A549 (cell line): ENCODE measurements at regions of chr12 and their contacts with region 1.

Region 1: GRCh38 chr12:54749191-54749818 is 101.1 kb upstream of the DCD start:
- DNase-seq: peak; percentile 43 to 64
- ATAC-seq: peak; percentile 78 to 88
- H3K4me3 ChIP-seq: no peak overlapping the region
- H3K27ac ChIP-seq: no peak overlapping the region
- H3K4me1 ChIP-seq: no peaks in the 10 kb centered on the region
- CTCF ChIP-seq: peak; percentile 89
- EP300 ChIP-seq: no peak
- POLR2A ChIP-seq: no peak
- RAD21 ChIP-seq: peak; percentile 80 to 85

Region 2: GRCh38 chr12:53454710-53455109 is 1294.6 kb before region 1 on chr12:
- CTCF ChIA-PET with region 1: no interaction called
- POLR2A ChIA-PET with region 1: no interaction called
- DNase-seq: no peak
- ATAC-seq: no peak
- H3K4me3 ChIP-seq: no peak overlapping the region; the same call in 2 of the 3 replicates
- H3K27ac ChIP-seq: no peak overlapping the region
- H3K4me1 ChIP-seq: peaks cover 28% of the 10 kb centered on the region
- CTCF ChIP-seq: no peak
- EP300 ChIP-seq: no peak
- POLR2A ChIP-seq: no peak
- RAD21 ChIP-seq: no peak

Region 3: DNA sequence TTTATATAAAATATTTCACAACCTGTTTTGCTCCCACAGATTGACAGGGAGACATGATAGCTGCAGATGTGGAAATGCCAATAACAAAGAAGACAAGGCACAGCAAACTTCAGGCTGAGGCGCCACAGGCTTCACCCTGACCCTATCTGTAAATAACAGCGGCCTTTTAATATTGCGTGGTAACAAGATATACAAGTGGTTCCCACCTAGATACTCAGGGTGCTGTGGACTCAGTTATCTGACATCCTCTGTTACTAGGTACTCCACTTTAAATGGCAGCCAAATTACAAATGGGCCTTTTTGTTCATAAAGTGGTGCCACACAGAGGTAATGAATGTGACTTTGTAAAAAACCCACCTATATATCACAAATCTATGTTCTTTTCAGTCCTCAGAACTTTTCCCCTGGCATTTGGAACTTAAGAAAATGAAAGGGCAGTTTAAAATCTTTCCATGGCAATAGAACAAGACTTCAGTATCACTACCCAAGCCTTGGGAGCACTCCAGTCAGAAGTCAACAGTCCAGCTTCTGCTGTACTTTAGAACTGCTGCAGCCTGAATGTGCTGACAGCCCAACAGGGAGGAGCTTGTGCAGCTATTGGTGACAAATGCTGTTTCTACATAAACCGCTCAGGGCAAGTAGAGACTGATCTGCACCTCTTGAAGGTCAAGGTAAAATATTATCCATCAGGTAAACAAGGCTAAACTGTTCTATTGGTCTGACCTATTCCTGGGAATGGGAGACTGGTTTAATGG is 14.9 kb before region 1 on chr12:
- CTCF ChIA-PET with region 1: interaction called, 15 read pairs
- POLR2A ChIA-PET with region 1: no interaction called
- DNase-seq: no peak
- ATAC-seq: no peak
- H3K4me3 ChIP-seq: no peak overlapping the region
- H3K27ac ChIP-seq: no peak overlapping the region
- H3K4me1 ChIP-seq: no peaks in the 10 kb centered on the region
- CTCF ChIP-seq: no peak
- EP300 ChIP-seq: no peak
- POLR2A ChIP-seq: no peak
- RAD21 ChIP-seq: no peak

Region 4: DNA sequence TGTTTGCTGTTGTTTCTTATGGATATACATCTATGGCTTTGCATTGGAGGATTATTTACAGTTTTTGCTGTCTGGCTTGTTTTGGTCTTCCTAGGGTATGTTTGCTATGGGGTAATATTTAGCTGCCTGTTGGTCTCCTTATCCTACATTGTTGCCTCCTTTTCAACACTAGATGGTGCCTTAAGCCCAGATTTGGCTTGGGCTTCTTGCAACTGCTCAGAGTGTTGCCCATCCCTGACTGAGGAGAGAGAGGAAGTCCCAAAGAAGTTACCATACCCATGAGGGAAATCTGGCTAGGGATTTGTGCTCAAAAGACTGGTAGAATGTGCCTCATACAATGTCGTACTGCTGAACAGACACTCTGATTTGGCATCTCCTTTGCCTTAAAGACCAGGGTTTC is 10.4 kb after region 1 on chr12:
- CTCF ChIA-PET with region 1: interaction called, 40 read pairs
- POLR2A ChIA-PET with region 1: no interaction called
- DNase-seq: peak in 1 of 2 experiments; percentile 56
- ATAC-seq: peak; percentile 90 to 92; a peak in 5 of 6 replicates
- H3K4me3 ChIP-seq: no peak overlapping the region
- H3K27ac ChIP-seq: no peak overlapping the region
- H3K4me1 ChIP-seq: no peaks in the 10 kb centered on the region
- CTCF ChIP-seq: peak; percentile 52
- EP300 ChIP-seq: no peak
- POLR2A ChIP-seq: no peak
- RAD21 ChIP-seq: peak; percentile 69 to 83

Region 5: GRCh38 chr12:54952340-54952739 is 203.0 kb after region 1 on chr12:
- CTCF ChIA-PET with region 1: interaction called, 127 read pairs
- POLR2A ChIA-PET with region 1: no interaction called
- DNase-seq: no peak
- ATAC-seq: no peak
- H3K4me3 ChIP-seq: no peak overlapping the region
- H3K27ac ChIP-seq: no peak overlapping the region
- H3K4me1 ChIP-seq: no peaks in the 10 kb centered on the region
- CTCF ChIP-seq: no peak
- EP300 ChIP-seq: no peak
- POLR2A ChIP-seq: no peak
- RAD21 ChIP-seq: no peak

Region 6: GRCh38 chr12:54958048-54958658 is 208.8 kb after region 1 on chr12:
- CTCF ChIA-PET with region 1: interaction called, 127 read pairs
- POLR2A ChIA-PET with region 1: no interaction called
- DNase-seq: peak; percentile 22 to 75
- ATAC-seq: peak; percentile 69 to 89; a peak in 5 of 6 replicates
- H3K4me3 ChIP-seq: no peak overlapping the region
- H3K27ac ChIP-seq: no peak overlapping the region
- H3K4me1 ChIP-seq: no peaks in the 10 kb centered on the region
- CTCF ChIP-seq: peak; percentile 88
- EP300 ChIP-seq: no peak
- POLR2A ChIP-seq: no peak
- RAD21 ChIP-seq: peak; percentile 96

Region 7: DNA sequence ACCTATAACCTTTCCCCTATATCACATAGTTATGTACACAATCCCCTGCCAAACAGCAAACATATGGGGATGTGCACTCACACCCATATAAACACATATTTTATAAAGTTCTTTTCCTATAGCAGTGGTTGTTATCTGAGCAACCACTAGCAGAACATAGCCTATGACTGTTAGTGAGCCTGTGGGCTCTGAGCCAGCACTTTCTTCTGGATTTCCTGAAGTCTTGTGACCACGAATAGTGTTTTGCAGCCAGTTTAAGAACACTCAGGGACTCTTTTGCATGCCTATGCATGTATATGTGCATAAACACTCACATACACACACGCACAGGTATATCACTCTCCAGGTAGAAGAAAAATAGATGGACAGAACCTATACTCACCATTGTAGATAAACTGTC is 218.2 kb after region 1 on chr12:
- CTCF ChIA-PET with region 1: interaction called, 127 read pairs
- POLR2A ChIA-PET with region 1: no interaction called
- DNase-seq: no peak
- ATAC-seq: no peak
- H3K4me3 ChIP-seq: no peak overlapping the region
- H3K27ac ChIP-seq: no peak overlapping the region
- H3K4me1 ChIP-seq: no peaks in the 10 kb centered on the region
- CTCF ChIP-seq: no peak
- EP300 ChIP-seq: no peak
- POLR2A ChIP-seq: no peak
- RAD21 ChIP-seq: no peak